Colonic mucosa (tissue), 4 donors: ENCODE measurements at regions of chr9 and their contacts with region 1.

Region 1: DNA sequence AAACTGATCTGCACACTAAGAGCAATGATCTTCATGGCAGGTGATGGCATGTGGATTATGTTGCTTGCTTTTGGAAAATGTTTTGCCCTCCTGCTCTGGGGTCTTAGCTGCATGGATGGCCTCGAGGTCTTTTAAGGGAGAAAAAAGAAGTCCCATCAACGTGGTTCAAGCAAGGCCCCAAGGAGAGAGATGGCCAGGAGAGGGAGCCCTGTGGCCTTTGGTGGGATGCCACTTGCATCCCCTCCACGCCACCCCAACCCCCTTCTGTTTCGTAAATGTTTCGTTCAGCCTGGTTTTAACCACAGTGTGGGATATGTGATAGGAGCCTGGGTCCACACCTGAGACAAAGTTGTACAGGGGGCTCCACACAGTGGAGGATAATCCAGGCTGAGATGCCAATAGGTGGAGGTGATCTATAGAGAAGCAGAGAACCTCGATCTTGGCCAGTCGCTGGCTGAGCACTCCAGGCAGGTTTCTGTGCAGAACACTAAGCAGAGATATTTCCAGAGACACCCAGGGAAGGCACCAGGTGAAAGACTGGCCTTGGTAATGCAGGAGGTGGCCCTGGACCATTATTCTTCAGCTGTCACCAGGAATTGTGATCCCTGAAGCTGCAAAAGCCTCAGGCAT is 25.8 kb upstream of the FRRS1L start:
- DNase-seq: peak; percentile 65
- H3K4me3 ChIP-seq: no peak overlapping the region
- H3K27ac ChIP-seq: no peak overlapping the region
- H3K4me1 ChIP-seq: no peaks in the 10 kb centered on the region
- H3K27me3 ChIP-seq: no peaks in the 10 kb centered on the region
- CTCF ChIP-seq: peak; percentile 45

Region 2: DNA sequence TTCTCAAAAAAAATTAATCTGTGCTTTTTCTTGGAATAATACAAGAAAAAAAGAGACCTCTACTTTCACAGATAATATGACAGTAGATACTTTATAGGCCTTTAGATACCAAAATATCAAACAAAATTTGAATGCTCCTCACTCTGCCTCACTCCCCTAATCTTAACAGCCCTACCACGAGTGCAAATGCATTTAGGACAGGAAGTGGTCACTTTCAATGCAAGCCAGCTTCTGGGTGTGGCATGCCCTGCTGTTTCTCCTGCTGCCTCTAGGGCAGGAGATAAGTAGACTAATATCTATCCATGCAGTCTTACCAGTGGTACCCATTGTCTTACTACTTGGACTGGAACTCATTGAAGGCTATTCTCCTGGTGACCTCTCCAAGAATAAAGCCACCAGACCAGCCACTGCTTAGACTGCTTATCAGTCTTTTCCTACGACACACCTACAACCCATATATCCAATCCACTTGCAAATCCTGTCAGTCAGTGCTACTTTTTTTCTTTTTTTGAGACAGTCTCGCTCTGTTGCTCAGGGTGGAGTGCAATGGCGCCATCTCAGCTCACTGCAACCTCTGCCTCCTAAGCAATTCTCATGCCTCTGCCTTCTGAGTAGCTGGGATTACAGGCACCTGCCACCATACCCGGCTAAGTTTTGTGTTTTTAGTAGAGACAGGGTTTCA is 48.8 kb before region 1 on chr9:
- intact Hi-C with region 1: no loop called
- DNase-seq: no peak
- H3K4me3 ChIP-seq: no peak overlapping the region
- H3K27ac ChIP-seq: no peak overlapping the region
- H3K4me1 ChIP-seq: no peaks in the 10 kb centered on the region
- H3K27me3 ChIP-seq: no peaks in the 10 kb centered on the region
- CTCF ChIP-seq: peak; percentile 29

Region 3: GRCh38 chr9:109321727-109322126 is 128.9 kb after region 1 on chr9:
- intact Hi-C with region 1: loop called (anchors 2 kb)
- DNase-seq: no peak
- H3K4me3 ChIP-seq: no peak overlapping the region
- H3K27ac ChIP-seq: no peak overlapping the region
- H3K4me1 ChIP-seq: no peaks in the 10 kb centered on the region
- H3K27me3 ChIP-seq: peaks cover 10% of the 10 kb centered on the region
- CTCF ChIP-seq: no peak

Region 4: DNA sequence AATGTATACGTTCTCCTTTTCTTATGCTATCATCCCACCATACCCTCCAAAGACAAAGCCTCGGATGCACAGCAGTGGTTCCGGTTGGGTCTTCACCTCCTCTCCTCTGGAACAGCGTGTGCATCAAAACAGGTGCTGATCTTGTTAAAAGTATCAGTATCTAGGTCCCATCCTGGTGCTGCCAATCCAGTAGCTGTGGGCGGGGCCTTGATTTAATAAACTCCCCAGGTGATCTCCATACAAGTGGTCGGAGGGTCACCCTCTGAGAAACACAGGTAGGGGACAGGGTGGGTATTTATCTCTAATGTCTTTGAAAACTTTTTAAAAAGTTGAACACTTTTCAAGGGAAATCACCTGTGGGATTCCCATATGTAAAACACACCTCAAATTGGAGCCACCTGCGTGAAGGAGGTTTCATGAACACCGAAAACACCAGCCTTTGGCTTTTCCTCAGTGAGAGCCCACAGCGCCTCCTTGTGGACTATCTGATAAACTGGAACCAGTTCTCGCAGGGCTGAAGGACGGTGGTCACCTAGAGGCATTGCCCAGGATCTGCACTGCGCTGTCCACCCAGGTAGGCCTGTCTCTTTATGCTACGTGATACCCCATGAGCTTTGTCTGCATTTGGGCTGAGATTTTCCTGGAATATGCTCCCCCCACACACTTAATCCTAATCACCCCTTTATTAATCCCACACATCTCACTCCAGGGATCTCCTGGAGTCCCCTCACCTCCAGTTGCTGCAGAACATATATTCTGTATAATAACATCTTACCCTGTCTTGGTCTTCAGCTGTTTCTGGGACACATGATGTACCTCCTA is 208.5 kb after region 1 on chr9:
- intact Hi-C with region 1: loop called (anchors 10 kb)
- DNase-seq: peak; percentile 64
- H3K4me3 ChIP-seq: no peak overlapping the region
- H3K27ac ChIP-seq: no peak overlapping the region
- H3K4me1 ChIP-seq: no peaks in the 10 kb centered on the region
- H3K27me3 ChIP-seq: no peaks in the 10 kb centered on the region
- CTCF ChIP-seq: peak; percentile 55